ENCODE measurements at regions of chr18 and their contacts with region 1.

Region 1: DNA sequence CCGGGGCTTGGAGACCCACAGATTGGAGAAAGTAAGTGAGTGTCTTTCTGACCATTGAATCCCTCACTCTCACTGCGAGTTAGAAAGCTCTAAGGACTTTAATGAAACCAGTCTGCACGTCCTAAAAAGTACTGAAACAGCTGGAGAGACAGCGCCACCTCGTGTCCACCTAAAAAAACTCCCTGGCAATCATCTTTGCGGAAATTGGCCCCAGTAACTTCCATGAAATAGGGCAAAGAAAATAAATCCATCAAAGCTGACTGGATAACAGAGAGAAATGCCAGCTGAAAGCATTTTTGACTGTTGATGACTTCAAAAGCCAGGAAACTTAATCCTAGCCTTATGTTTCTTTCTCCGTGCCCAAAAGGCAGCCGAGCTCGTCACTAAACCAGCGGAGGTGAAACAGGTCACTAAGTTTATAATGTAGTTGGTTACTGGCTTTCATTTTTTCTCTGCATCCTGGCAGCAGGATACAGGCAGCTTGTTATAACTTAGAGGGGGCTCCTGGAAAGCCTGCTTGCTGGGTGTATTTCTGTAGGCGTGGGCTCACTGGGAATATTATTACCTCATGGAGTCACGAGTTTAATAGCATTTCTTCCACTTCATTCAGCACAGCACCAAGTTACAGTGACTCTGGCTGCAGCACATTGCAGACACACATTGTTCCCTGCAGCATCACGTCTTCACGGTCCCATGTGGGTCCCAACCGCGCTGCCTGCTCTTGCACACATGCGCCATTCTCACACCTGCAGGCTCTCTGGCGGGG is 266.5 kb downstream of the HRH4 start:
- DNase-seq: peak; percentile 82
- H3K4me3 Mint-ChIP-seq: no peak overlapping the region
- H3K27ac Mint-ChIP-seq: no peak overlapping the region
- H3K4me1 Mint-ChIP-seq: no peaks in the 10 kb centered on the region
- H3K27me3 Mint-ChIP-seq: peaks cover 4% of the 10 kb centered on the region

Region 2: DNA sequence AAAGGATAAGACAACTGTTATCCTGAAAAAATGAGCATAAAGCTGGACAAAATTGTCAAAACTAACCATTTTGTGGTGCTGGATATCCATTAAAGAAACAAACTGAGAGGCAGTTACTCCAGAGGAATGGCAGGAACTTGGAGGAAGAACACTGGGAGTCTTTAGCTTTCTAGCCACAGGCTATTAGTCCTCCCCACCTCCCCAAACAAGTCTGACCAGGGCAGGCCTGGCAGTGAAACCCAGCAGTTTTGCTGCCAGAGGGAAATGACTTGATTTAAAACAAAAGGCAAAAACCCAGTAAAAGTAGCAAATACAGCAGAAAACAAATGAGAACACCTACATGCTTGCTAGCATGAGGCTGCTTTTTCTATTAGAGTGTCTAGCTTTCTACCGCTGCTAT is 364.2 kb before region 1 on chr18:
- intact Hi-C with region 1: loop called (anchors 5 kb)
- DNase-seq: no peak
- H3K4me3 Mint-ChIP-seq: no peak overlapping the region
- H3K27ac Mint-ChIP-seq: no peak overlapping the region
- H3K4me1 Mint-ChIP-seq: peaks cover 13% of the 10 kb centered on the region
- H3K27me3 Mint-ChIP-seq: no peaks in the 10 kb centered on the region

Region 3: GRCh38 chr18:24488824-24489493 is 238.0 kb before region 1 on chr18:
- intact Hi-C with region 1: loop called (anchors 1 kb)
- DNase-seq: peak; percentile 76
- H3K4me3 Mint-ChIP-seq: no peak overlapping the region
- H3K27ac Mint-ChIP-seq: no peak overlapping the region
- H3K4me1 Mint-ChIP-seq: peaks cover 7% of the 10 kb centered on the region
- H3K27me3 Mint-ChIP-seq: peaks cover 16% of the 10 kb centered on the region

Region 4: GRCh38 chr18:24514439-24514838 is 212.5 kb before region 1 on chr18:
- intact Hi-C with region 1: no loop called
- DNase-seq: no peak
- H3K4me3 Mint-ChIP-seq: no peak overlapping the region
- H3K27ac Mint-ChIP-seq: no peak overlapping the region
- H3K4me1 Mint-ChIP-seq: no peaks in the 10 kb centered on the region
- H3K27me3 Mint-ChIP-seq: no peaks in the 10 kb centered on the region

Region 5: DNA sequence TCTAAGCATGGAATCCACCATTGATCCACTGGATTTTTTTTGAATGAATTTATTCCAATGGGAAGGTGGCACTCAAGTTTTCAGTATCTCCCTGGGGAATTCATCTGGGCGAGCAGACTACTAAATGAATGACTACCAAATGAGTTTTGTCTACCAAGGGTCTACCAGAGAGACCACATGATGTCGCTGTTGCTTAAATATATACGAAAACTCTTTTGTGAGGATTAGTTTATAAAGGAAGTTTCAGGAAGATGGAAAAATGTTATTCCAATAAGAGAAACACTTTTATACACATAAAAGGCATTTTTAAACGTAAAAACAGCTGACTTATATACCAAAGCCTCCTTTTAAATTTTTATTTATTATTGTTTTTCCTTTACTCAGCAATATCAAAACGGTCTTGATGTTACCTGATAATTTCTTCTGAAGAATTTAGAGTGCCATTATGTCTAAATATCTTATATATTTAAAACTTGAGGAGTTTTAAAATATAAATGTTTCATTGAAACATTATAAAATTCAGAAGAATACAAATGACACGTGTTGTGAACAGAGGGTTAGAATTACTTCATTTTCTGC is 126.7 kb before region 1 on chr18:
- intact Hi-C with region 1: loop called (anchors 1 kb)
- DNase-seq: peak; percentile 58
- H3K4me3 Mint-ChIP-seq: no peak overlapping the region
- H3K27ac Mint-ChIP-seq: no peak overlapping the region
- H3K4me1 Mint-ChIP-seq: no peaks in the 10 kb centered on the region
- H3K27me3 Mint-ChIP-seq: peaks cover 7% of the 10 kb centered on the region

Region 6: GRCh38 chr18:24710474-24710873 is 16.4 kb before region 1 on chr18:
- intact Hi-C with region 1: no loop called
- DNase-seq: no peak
- H3K4me3 Mint-ChIP-seq: no peak overlapping the region
- H3K27ac Mint-ChIP-seq: no peak overlapping the region
- H3K4me1 Mint-ChIP-seq: no peaks in the 10 kb centered on the region
- H3K27me3 Mint-ChIP-seq: no peaks in the 10 kb centered on the region

Region 7: GRCh38 chr18:24862201-24862816 is 135.4 kb after region 1 on chr18:
- intact Hi-C with region 1: no loop called
- DNase-seq: no peak
- H3K4me3 Mint-ChIP-seq: no peak overlapping the region
- H3K27ac Mint-ChIP-seq: no peak overlapping the region
- H3K4me1 Mint-ChIP-seq: no peaks in the 10 kb centered on the region
- H3K27me3 Mint-ChIP-seq: no peaks in the 10 kb centered on the region